HepG2 (cell line): ENCODE measurements at regions of chr6 and their contacts with region 1.

Region 1: DNA sequence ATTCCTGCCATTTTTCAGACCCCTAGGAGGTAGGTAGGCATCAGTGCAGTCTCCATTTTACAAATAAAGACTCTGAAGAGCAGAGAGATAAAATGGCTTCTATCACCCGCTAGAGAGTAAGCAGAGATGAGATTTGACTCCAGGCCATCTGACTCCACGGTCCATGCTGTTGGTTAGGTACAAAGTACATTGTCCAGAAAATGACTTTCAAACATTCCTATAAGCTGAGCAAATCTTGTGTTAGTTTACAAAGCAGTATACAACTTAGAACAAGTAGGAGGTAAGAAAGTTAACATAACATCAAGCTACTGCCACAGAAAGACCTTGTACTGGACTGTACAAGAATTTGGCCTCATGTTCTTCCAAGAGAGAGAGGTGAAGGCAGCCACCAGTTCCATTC is 14.9 kb downstream of the BTN1A1 start:
- DNase-seq: peak; percentile 92
- ATAC-seq: peak; percentile 92
- H3K4me3 ChIP-seq: peak overlapping the region in 1 of 3 experiments; percentile 26; a peak in 1 of 6 replicates
- H3K27ac ChIP-seq: peak overlapping the region; percentile 82
- H3K4me1 ChIP-seq: peaks cover 53% of the 10 kb centered on the region
- H3K27me3 ChIP-seq: no peaks in the 10 kb centered on the region
- CTCF ChIP-seq: no peak
- EP300 ChIP-seq: peak in 1 of 2 experiments; percentile 75; a peak in 2 of 4 replicates
- POLR2A ChIP-seq: no peak
- RAD21 ChIP-seq: no peak

Region 2: DNA sequence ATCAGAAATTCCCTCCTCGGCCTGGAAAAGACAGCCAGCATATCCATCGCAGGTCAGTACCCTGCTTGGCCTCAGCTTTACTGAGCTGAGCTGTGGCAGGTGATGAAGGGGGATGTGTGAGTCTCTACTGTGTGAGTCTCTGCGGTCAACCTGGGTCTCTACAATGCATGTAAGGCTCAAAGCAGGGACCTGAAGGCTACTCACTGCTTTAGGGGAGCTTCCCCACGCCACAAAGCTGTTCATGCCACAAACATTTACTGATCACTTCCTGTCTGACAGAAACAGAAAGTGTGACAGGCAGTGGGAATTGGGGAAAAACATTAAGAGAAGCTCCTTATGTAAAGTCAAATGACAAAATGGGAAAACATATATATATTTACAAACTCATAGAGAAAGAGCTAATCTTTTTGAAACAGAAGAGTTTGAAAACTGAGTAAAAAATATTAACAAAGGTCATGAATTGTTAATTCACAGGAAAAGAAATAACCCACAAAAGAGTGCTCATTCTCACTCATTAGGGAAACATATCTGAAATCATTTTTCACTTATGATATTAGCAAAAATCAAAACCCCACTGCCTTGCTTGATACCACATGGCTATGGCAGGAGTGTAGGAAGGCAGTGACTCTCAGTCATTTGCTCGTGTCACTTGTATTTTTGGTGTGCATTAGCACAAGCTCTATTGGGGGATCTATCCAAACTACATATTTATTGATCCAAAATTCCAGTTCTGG is 68.9 kb before region 1 on chr6:
- CTCF ChIA-PET with region 1: no interaction called
- POLR2A ChIA-PET with region 1: no interaction called
- in situ Hi-C with region 1: no loop called
- intact Hi-C with region 1: no loop called
- DNase-seq: no peak
- ATAC-seq: no peak
- H3K4me3 ChIP-seq: no peak overlapping the region
- H3K27ac ChIP-seq: no peak overlapping the region
- H3K4me1 ChIP-seq: 0 out of 2 replicates have a peak, but pooled peaks cover 4% of the 10 kb centered on the region
- H3K27me3 ChIP-seq: no peaks in the 10 kb centered on the region
- CTCF ChIP-seq: no peak
- EP300 ChIP-seq: no peak
- POLR2A ChIP-seq: no peak
- RAD21 ChIP-seq: no peak

Region 3: GRCh38 chr6:26473758-26474438 is 41.1 kb before region 1 on chr6:
- CTCF ChIA-PET with region 1: no interaction called
- POLR2A ChIA-PET with region 1: interaction called, 19 read pairs
- in situ Hi-C with region 1: no loop called
- intact Hi-C with region 1: loop called (anchors 1 kb)
- DNase-seq: peak; percentile 90
- ATAC-seq: peak; percentile 92
- H3K4me3 ChIP-seq: peak overlapping the region; percentile 57 to 84 (median 70)
- H3K27ac ChIP-seq: peak overlapping the region; percentile 83
- H3K4me1 ChIP-seq: peaks cover 61% of the 10 kb centered on the region
- H3K27me3 ChIP-seq: no peaks in the 10 kb centered on the region
- CTCF ChIP-seq: no peak
- EP300 ChIP-seq: no peak
- POLR2A ChIP-seq: peak; percentile 62 to 72
- RAD21 ChIP-seq: no peak